ENCODE measurements at regions of chr17 and their contacts with region 1.

Region 1: GRCh38 chr17:8091033-8091687 is 3.6 kb upstream of the ALOX12B start:
- DNase-seq: no peak
- H3K27ac ChIP-seq: no peak overlapping the region
- CTCF ChIP-seq: no peak

Region 2: DNA sequence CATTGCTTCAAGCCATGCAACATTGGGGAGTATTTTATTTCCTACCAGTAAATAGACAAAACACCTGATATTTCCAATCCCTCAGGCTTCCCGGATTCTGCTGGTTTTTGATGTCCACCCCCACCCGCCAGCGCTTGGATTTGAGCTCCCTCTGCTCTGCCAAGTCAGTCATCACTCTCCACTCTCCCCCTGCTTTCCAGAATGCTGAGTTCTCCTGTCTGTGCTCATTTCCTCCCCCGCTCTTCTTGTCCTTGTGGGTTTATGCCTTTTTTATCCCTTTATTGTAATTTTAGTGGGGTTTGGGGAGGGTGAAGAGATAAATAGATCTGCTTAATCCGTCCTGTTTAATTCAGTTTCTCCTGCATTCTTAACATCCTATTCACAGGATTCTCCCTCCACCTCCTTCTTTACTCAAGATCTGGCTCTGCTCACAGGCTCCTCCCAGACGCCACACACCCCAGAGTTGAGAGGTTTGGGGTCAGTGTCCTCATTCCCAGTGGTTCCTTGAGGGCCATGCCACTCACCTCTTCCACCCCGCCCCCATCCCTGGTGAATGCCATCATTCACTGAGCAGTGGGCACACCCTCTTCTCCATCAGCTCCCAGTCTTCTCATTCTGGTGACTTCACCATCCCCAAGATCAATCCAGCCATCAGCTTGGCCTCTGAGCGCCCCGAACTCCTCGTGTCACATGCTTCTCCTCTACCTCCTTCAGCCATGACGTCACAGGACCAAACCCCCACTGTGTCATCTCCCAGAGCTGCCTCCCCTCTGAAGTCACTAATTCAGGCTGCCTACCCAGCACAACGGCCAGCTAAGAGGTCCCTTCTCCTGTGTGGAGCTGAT is 103.9 kb before region 1 on chr17:
- CTCF ChIA-PET with region 1: no interaction called
- POLR2A ChIA-PET with region 1: no interaction called
- DNase-seq: no peak
- H3K27ac ChIP-seq: no peak overlapping the region
- CTCF ChIP-seq: no peak

Region 3: DNA sequence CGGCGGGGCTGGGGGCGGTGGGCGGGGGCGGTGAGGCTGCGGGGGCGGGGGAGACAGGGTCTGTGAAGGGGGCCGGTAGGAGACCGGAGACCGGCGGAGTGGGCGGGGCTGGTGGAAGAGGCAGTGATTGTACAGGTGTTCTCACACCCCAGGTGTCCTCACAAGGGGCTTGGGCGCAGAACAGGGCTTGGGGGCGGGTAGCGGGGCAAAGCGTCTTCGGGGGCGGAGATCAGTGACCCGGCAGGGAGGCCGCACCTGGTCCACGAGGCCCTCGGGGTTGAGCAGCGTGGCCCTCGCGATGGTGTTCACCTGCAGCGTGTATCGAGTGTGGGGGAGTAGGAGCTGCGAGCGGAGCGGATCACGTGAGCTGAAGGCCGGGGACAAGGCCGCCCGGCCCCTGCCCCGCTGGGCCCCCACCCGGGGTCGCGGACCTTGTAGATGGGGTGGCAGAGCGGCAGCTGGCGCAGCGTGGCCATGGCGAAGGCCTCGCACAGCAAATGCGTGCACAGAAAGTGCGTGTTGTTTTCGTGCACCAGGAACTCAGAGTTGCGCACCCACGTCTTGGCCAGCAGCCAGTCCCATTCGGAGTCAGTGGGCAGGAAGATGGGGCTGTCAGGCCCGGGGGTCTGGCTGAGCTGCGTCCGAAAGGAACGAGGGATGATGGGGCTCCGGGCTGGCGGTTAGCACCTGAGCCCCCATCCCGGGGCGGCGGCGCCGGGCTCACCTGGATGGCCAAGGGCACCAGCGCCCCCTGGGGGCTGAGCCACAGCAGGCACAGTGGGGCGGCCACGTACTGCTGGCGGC is 18.7 kb after region 1 on chr17:
- CTCF ChIA-PET with region 1: interaction called, 14 read pairs
- POLR2A ChIA-PET with region 1: no interaction called
- DNase-seq: peak; percentile 55
- H3K27ac ChIP-seq: no peak overlapping the region; the same call in 1 of the 2 replicates
- CTCF ChIP-seq: peak; percentile 92

Measured in RWPE1 (cell line).